Vagina (tissue), 2 donors: ENCODE measurements at regions of chr15 and their contacts with region 1.

Region 1: DNA sequence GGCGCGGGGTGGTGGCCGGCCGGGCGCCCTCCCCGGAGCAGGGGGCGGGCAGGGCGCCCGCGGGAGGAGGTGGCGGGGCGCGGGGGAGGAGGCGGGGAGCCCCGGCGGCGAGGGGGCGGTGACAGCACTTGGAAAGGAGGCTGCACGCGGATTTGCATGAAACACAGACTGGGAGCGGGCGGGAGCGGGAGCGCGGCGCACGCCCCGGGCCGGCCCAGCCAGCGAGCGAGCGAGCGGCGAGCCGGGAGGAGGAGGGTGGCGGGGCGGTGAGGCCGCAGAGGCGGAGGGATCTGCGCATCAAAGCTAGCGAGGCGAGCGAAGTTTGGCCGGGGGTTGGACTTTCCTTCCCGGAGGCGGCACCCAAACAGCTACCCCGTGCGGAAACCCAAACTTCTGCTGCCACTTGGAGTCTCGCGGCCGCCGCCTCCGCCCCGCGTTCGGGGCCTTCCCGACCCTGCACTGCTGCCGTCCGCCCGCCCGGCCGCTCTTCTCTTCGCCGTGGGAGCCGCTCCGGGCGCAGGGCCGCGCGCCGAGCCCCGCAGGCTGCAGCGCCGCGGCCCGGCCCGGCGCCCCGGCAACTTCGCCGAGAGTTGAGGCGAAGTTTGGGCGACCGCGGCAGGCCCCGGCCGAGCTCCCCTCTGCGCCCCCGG is at the start of gene SMAD3:
- DNase-seq: no peak
- H3K4me3 ChIP-seq: peak within 1 kb of the TSS; percentile 89 to 93
- H3K27ac ChIP-seq: peak within 1 kb of the TSS; percentile 92
- H3K4me1 ChIP-seq: peaks cover 43% of the 10 kb centered on the region
- H3K27me3 ChIP-seq: no peaks in the 10 kb centered on the region
- CTCF ChIP-seq: no peak
- POLR2A ChIP-seq: peak in 1 of 2 donors; percentile 53
- total RNA-seq, gene SMAD3: 53.5 TPM

Region 2: GRCh38 chr15:66819084-66819483 is 246.5 kb before region 1 on chr15:
- intact Hi-C with region 1: no loop called
- DNase-seq: no peak
- H3K4me3 ChIP-seq: no peak overlapping the region
- H3K27ac ChIP-seq: no peak overlapping the region
- H3K4me1 ChIP-seq: no peaks in the 10 kb centered on the region
- H3K27me3 ChIP-seq: no peaks in the 10 kb centered on the region
- CTCF ChIP-seq: no peak
- POLR2A ChIP-seq: no peak

Region 3: GRCh38 chr15:67017311-67017710 is 48.3 kb before region 1 on chr15:
- intact Hi-C with region 1: loop called (anchors 5 kb)
- DNase-seq: peak in 1 of 2 donors; percentile 52
- H3K4me3 ChIP-seq: no peak overlapping the region
- H3K27ac ChIP-seq: no peak overlapping the region
- H3K4me1 ChIP-seq: no peaks in the 10 kb centered on the region
- H3K27me3 ChIP-seq: no peaks in the 10 kb centered on the region
- CTCF ChIP-seq: no peak
- POLR2A ChIP-seq: no peak

Region 4: GRCh38 chr15:67048281-67049279 is 17.0 kb before region 1 on chr15:
- intact Hi-C with region 1: no loop called
- DNase-seq: no peak
- H3K4me3 ChIP-seq: no peak overlapping the region
- H3K27ac ChIP-seq: peak overlapping the region; percentile 51
- H3K4me1 ChIP-seq: peaks cover 36% of the 10 kb centered on the region
- H3K27me3 ChIP-seq: no peaks in the 10 kb centered on the region
- CTCF ChIP-seq: no peak
- POLR2A ChIP-seq: no peak

Region 5: GRCh38 chr15:67120839-67121643 is 55.5 kb after region 1 on chr15:
- intact Hi-C with region 1: loop called (anchors 10 kb)
- DNase-seq: no peak
- H3K4me3 ChIP-seq: peak overlapping the region; percentile 15 to 44
- H3K27ac ChIP-seq: peak overlapping the region; percentile 87
- H3K4me1 ChIP-seq: peaks cover 95% of the 10 kb centered on the region
- H3K27me3 ChIP-seq: no peaks in the 10 kb centered on the region
- CTCF ChIP-seq: no peak
- POLR2A ChIP-seq: peak in 1 of 2 donors; percentile 14

Region 6: GRCh38 chr15:67254238-67255175 is 188.9 kb after region 1 on chr15 and contains the starts of genes AAGAB and IQCH:
- intact Hi-C with region 1: loop called (anchors 10 kb)
- DNase-seq: peak; percentile 96
- H3K4me3 ChIP-seq: peak within 1 kb of the TSS; percentile 77 to 92
- H3K27ac ChIP-seq: peak within 1 kb of the TSS; percentile 85
- H3K4me1 ChIP-seq: peaks cover 24% of the 10 kb centered on the region
- H3K27me3 ChIP-seq: no peaks in the 10 kb centered on the region
- CTCF ChIP-seq: peak in 1 of 3 experiments; percentile 18
- POLR2A ChIP-seq: no peak
- total RNA-seq, gene AAGAB: 41.0 TPM
- total RNA-seq, gene IQCH: 1.5 TPM